H1 (cell line): ENCODE measurements at regions of chr5 and their contacts with region 1.

Region 1: GRCh38 chr5:171907725-171908343 is 98.6 kb downstream of the FBXW11 start:
- DNase-seq: no peak
- H3K4me3 ChIP-seq: no peak overlapping the region
- H3K27ac ChIP-seq: no peak overlapping the region
- H3K4me1 ChIP-seq: peaks cover 0 to 4% (median 2%) of the 10 kb centered on the region in 4 experiments; a peak in 3 of 7 replicates
- H3K27me3 ChIP-seq: no peaks in the 10 kb centered on the region
- CTCF ChIP-seq: peak in 2 of 3 experiments; percentile 60 to 73; a peak in 3 of 4 replicates
- EP300 ChIP-seq: no peak
- POLR2A ChIP-seq: no peak
- RAD21 ChIP-seq: peak; percentile 67 to 74

Region 2: GRCh38 chr5:171757853-171758535 is 149.8 kb before region 1 on chr5:
- CTCF ChIA-PET with region 1: no interaction called
- POLR2A ChIA-PET with region 1: no interaction called
- DNase-seq: no peak
- H3K4me3 ChIP-seq: no peak overlapping the region
- H3K27ac ChIP-seq: no peak overlapping the region
- H3K4me1 ChIP-seq: no peaks in the 10 kb centered on the region
- H3K27me3 ChIP-seq: no peaks in the 10 kb centered on the region; a peak in 1 of 7 replicates
- CTCF ChIP-seq: no peak
- EP300 ChIP-seq: no peak
- POLR2A ChIP-seq: no peak
- RAD21 ChIP-seq: no peak

Region 3: DNA sequence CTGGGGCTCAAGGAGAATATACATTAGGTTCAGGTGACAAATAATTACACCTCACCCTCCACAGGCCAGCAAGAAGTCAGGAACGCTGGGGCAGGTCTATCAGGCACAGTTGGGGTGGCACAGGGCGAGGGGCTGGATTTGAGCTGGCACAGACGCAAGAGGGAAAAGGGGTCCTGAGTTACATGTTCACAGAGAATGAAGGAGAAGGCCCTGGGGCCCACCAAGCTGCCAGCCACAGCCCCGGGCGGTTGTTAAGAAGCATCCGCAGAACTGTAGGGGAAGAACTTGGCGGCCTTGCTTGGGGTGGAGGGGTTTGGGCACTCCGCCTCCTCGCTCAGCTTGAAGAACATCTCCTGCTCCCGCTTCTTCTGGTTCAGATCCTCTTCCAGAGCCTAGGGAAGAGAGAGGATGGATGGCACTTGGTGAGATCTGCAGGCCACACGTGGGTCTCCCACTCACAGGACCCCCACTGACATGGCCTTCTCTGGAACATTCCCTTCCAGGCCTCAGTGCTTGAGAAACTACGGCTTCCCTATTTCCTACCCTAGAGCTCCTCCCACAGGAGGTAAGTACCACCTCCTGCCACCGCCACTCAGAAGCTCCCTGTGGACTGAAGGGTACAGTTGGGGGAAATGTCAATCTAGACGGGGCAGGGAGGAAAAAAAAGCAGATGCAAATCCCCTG is 136.9 kb after region 1 on chr5:
- CTCF ChIA-PET with region 1: interaction called, 83 read pairs
- POLR2A ChIA-PET with region 1: interaction called, 4 read pairs
- DNase-seq: no peak
- H3K4me3 ChIP-seq: no peak overlapping the region
- H3K27ac ChIP-seq: no peak overlapping the region
- H3K4me1 ChIP-seq: peaks cover 0 to 10% (median 0%) of the 10 kb centered on the region in 4 experiments; a peak in 5 of 7 replicates
- H3K27me3 ChIP-seq: no peaks in the 10 kb centered on the region
- CTCF ChIP-seq: peak; percentile 24 to 40 (median 31); a peak in 3 of 4 replicates
- EP300 ChIP-seq: no peak
- POLR2A ChIP-seq: no peak
- RAD21 ChIP-seq: peak; percentile 64 to 72

Region 4: DNA sequence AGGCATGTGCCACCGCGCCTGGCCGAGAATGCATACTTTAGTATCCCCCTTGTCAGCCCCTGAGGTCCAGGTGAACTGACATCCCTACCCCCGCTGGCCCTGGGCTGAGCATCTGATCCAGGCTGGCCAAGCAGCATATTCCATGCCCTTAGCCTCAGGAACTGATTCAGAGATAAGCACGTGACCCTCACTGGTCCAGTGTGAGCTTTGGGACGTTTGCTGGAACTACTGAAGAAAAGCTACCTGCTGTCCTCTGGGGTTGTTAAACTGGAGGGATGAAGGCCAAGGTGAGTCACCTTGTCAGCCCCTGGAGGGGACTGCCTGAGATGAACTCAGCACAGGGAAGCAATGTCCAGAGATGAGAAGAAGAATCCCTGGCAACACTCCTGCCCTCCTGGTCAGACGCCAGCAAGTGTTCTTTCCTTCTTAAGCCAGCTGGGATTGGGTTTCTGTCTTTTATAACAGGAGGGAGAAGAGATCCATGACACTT is 157.7 kb after region 1 on chr5:
- CTCF ChIA-PET with region 1: interaction called, 40 read pairs
- POLR2A ChIA-PET with region 1: no interaction called
- DNase-seq: no peak
- H3K4me3 ChIP-seq: no peak overlapping the region
- H3K27ac ChIP-seq: no peak overlapping the region
- H3K4me1 ChIP-seq: peaks cover 0 to 5% (median 0%) of the 10 kb centered on the region in 4 experiments; a peak in 4 of 7 replicates
- H3K27me3 ChIP-seq: no peaks in the 10 kb centered on the region
- CTCF ChIP-seq: no peak
- EP300 ChIP-seq: no peak
- POLR2A ChIP-seq: no peak
- RAD21 ChIP-seq: no peak